GM12878 (cell line): ENCODE measurements at regions of chr6 and their contacts with region 1.

Region 1: GRCh38 chr6:157021344-157021992 is 244.3 kb downstream of the ARID1B start:
- DNase-seq: no peak
- ATAC-seq: peak; percentile 88
- H3K4me3 ChIP-seq: peak overlapping the region; percentile 86
- H3K27ac ChIP-seq: peak overlapping the region; percentile 95
- H3K4me1 ChIP-seq: peaks cover 32% of the 10 kb centered on the region
- H3K27me3 ChIP-seq: no peaks in the 10 kb centered on the region
- CTCF ChIP-seq: peak; percentile 17 to 42 (median 19); a peak in 4 of 6 replicates
- EP300 ChIP-seq: peak in 1 of 2 experiments; percentile 20; a peak in 1 of 4 replicates
- POLR2A ChIP-seq: peak; percentile 98
- RAD21 ChIP-seq: peak; percentile 17; the same call in 1 of the 2 replicates

Region 2: GRCh38 chr6:156912431-156912830 is 109.0 kb before region 1 on chr6:
- CTCF ChIA-PET with region 1: no interaction called
- POLR2A ChIA-PET with region 1: no interaction called
- RAD21 ChIA-PET with region 1: no interaction called
- SMC1A ChIA-PET with region 1: no interaction called
- in situ Hi-C with region 1: no loop called
- intact Hi-C with region 1: no loop called
- DNase-seq: no peak
- ATAC-seq: peak; percentile 28
- H3K4me3 ChIP-seq: no peak overlapping the region
- H3K27ac ChIP-seq: no peak overlapping the region
- H3K4me1 ChIP-seq: peaks cover 10% of the 10 kb centered on the region; the same call in 1 of the 2 replicates
- H3K27me3 ChIP-seq: no peaks in the 10 kb centered on the region
- CTCF ChIP-seq: no peak
- EP300 ChIP-seq: no peak
- POLR2A ChIP-seq: no peak
- RAD21 ChIP-seq: no peak

Region 3: GRCh38 chr6:156925718-156926615 is 95.5 kb before region 1 on chr6:
- CTCF ChIA-PET with region 1: no interaction called
- POLR2A ChIA-PET with region 1: interaction called, 5 read pairs
- RAD21 ChIA-PET with region 1: interaction called, 3 read pairs
- SMC1A ChIA-PET with region 1: interaction called, 8 read pairs
- in situ Hi-C with region 1: no loop called
- intact Hi-C with region 1: loop called (anchors 5 kb)
- DNase-seq: no peak
- ATAC-seq: peak; percentile 91
- H3K4me3 ChIP-seq: no peak overlapping the region
- H3K27ac ChIP-seq: peak overlapping the region; percentile 40; the same call in 1 of the 2 replicates
- H3K4me1 ChIP-seq: peaks cover 9% of the 10 kb centered on the region
- H3K27me3 ChIP-seq: no peaks in the 10 kb centered on the region
- CTCF ChIP-seq: no peak
- EP300 ChIP-seq: no peak
- POLR2A ChIP-seq: no peak
- RAD21 ChIP-seq: no peak

Region 4: GRCh38 chr6:156942266-156942665 is 79.2 kb before region 1 on chr6:
- CTCF ChIA-PET with region 1: interaction called, 3 read pairs
- POLR2A ChIA-PET with region 1: no interaction called
- RAD21 ChIA-PET with region 1: interaction called, 14 read pairs
- SMC1A ChIA-PET with region 1: interaction called, 4 read pairs
- in situ Hi-C with region 1: no loop called
- intact Hi-C with region 1: no loop called
- DNase-seq: no peak
- ATAC-seq: peak; percentile 65
- H3K4me3 ChIP-seq: no peak overlapping the region
- H3K27ac ChIP-seq: no peak overlapping the region
- H3K4me1 ChIP-seq: no peaks in the 10 kb centered on the region
- H3K27me3 ChIP-seq: no peaks in the 10 kb centered on the region
- CTCF ChIP-seq: peak in 1 of 3 experiments; percentile 12; a peak in 1 of 6 replicates
- EP300 ChIP-seq: no peak
- POLR2A ChIP-seq: no peak
- RAD21 ChIP-seq: no peak